Activated CD4-positive, alpha-beta memory T cell treated with anti-CD3 and anti-CD28 coated beads for 36 hours (primary cell): ENCODE measurements at regions of chr2 and their contacts with region 1.

Region 1: DNA sequence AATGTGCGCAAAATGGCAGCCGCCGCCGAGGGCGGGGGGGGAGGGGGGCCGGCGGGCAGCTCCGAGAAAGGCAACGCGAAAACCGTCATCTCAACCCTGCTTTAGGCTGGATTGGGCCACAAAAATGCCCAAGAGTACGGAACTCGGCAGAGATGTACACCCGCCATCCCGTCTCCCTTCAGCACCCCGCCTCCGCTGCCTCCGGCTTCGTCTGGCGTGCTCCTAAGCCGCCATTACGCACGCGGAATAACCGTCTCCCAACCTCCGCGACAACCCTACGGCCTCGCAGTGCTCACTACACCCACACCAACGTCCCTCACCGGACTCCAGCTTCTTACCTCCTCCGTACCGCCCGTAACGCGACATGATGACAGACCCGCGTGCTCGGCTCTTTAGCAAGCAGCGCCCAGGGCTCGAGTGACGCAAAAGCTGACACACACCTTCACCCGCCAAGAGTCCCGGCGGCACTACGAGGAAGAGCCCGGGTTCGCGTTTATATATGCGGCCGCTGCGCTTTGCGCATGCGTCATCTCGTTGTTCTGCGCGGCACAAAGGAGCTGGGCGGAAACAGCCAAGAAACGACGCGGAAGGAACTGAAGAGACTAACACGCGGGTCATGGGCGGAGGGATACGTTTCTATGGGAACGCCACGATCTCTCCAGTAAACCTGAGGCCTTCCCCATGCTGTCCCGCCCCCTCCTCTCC is at the start of gene SRSF7:
- DNase-seq: peak; percentile 98
- H3K4me3 Mint-ChIP-seq: peak within 1 kb of the TSS; percentile 95
- H3K27ac Mint-ChIP-seq: peak within 1 kb of the TSS; percentile 100
- H3K4me1 Mint-ChIP-seq: peaks cover 53% of the 10 kb centered on the region
- H3K27me3 Mint-ChIP-seq: peaks cover 6% of the 10 kb centered on the region
- total RNA-seq, gene SRSF7: 276 to 279 TPM

Region 2: DNA sequence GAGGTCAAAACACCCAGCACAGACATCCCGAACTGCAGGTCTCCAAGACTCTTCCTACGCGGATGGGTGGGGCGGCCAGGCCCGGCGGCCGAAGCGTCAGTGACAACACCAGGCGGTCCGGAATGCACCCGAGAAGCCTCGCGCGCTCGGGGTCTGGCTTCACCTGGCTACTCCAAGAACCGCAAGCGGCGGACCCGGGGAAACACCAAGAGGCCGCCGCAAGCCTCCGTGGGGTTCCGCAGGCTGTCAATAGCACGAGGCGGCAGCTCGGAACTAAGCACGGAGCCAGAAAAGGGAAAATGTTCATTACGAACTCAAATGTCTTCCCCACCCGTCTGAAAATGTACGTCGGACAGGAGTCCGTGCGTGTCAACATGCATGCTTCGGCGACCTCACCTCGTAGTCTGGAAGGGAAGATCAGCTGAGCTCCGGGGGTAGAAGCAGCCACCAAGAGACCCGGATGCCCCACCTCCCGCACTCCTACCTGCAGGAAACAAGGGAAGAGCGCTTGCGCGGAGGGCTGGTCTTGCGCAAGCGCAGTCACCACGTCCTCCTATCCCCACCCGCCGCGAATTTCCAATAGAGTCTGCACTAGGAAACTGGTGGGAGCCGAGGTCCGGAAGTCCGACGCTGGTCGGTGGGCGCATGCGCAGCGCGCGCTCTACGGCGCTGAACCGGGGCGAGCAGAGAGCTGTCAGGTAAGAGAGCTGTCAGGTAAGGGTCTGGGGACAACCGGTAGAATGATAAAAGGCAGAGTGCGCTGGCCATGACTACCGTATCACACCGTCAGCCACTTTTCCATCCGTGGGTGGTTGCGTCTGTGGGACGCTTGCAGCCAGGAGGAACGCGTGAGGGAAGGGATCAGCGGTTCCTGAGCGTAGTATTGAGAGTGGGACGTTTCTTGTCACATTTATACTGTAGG is 1666.9 kb before region 1 on chr2 and contains the starts of genes GPATCH11 and HEATR5B:
- CTCF ChIA-PET with region 1: no interaction called
- POLR2A ChIA-PET with region 1: no interaction called
- intact Hi-C with region 1: loop called (anchors 1 kb)
- DNase-seq: peak; percentile 96
- H3K4me3 Mint-ChIP-seq: no peak within 1 kb of the TSS
- H3K27ac Mint-ChIP-seq: no peak within 1 kb of the TSS
- H3K4me1 Mint-ChIP-seq: peaks cover 36% of the 10 kb centered on the region
- H3K27me3 Mint-ChIP-seq: no peaks in the 10 kb centered on the region
- total RNA-seq, gene GPATCH11: 12.6 to 13.0 TPM
- total RNA-seq, gene HEATR5B: 18.1 to 20.3 TPM

Region 3: GRCh38 chr2:38778687-38779082 is 27.6 kb after region 1 on chr2:
- CTCF ChIA-PET with region 1: no interaction called
- POLR2A ChIA-PET with region 1: interaction called, 21 read pairs
- intact Hi-C with region 1: loop called (anchors 1 kb)
- DNase-seq: no peak
- H3K4me3 Mint-ChIP-seq: peak overlapping the region; percentile 96
- H3K27ac Mint-ChIP-seq: peak overlapping the region; percentile 86
- H3K4me1 Mint-ChIP-seq: peaks cover 12% of the 10 kb centered on the region
- H3K27me3 Mint-ChIP-seq: peaks cover 9% of the 10 kb centered on the region

Region 4: GRCh38 chr2:38835015-38835601 is 84.1 kb after region 1 on chr2:
- CTCF ChIA-PET with region 1: no interaction called
- POLR2A ChIA-PET with region 1: no interaction called
- intact Hi-C with region 1: no loop called
- DNase-seq: no peak
- H3K4me3 Mint-ChIP-seq: no peak overlapping the region
- H3K27ac Mint-ChIP-seq: no peak overlapping the region
- H3K4me1 Mint-ChIP-seq: no peaks in the 10 kb centered on the region
- H3K27me3 Mint-ChIP-seq: no peaks in the 10 kb centered on the region

Region 5: DNA sequence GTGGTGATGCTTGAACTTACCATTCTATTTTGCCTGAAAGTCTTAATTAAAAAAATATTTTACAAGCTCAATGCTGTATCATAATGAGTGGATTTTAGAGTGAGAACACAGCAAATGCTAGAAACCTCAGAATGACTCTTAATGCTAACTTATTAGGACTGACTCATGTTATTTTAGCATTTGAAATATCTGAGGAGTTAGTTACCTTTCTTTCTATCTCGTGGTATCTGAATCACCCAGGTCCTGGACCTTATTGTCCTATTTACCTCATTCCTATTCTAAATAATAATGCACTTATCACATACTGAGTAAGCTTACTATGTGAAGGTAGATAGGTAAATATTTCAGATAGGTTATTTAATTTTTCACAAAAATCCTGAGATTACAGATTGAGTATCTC is 299.1 kb after region 1 on chr2:
- CTCF ChIA-PET with region 1: no interaction called
- POLR2A ChIA-PET with region 1: no interaction called
- intact Hi-C with region 1: no loop called
- DNase-seq: no peak
- H3K4me3 Mint-ChIP-seq: no peak overlapping the region
- H3K27ac Mint-ChIP-seq: no peak overlapping the region
- H3K4me1 Mint-ChIP-seq: no peaks in the 10 kb centered on the region
- H3K27me3 Mint-ChIP-seq: no peaks in the 10 kb centered on the region